Activated CD8-positive, alpha-beta T cell treated with anti-CD3 and anti-CD28 coated beads for 36 hours (primary cell): ENCODE measurements at regions of chr18 and their contacts with region 1.

Region 1: DNA sequence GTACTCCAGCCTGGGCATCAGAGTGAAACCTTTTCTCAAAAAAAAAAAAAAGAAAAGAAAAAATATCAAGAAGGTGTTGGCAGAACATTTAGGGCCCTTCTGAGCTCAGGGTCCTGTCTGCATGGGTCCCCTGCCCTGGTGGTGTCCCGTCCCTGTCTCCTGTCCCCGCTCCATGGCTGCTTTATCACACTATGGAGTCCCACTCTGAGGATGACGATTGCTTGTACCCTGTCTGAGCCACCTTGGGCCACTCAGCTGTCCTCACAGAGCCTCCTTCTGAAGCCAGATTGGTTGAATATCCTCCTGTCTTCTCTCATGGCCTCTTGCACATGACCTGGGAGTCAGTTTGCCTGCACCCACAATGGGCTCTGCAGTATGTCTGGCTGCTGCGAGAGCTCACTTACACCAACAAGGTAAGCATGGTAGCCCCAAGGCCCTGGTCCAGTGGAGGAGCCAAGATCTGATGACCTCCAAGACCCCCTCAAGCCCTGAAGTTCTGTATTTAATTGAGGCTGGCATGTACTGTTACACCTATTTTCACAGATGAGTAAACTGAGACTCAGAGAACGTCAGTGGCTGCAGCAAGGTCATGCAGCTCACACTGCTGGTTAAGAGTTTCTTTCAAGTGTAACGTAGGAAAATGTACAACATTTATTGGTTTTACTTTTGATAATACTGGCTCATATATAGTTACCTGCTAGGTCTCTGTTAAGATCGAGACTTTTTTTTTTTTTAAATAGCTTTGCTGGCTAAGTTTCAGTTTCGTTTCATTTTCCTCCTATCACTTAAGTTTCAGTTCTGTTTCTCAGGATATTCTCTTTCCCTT is 16.9 kb upstream of the ZCCHC2 start:
- DNase-seq: peak; percentile 58
- ATAC-seq: peak; percentile 96
- H3K4me3 Mint-ChIP-seq: peak overlapping the region; percentile 68
- H3K27ac Mint-ChIP-seq: peak overlapping the region; percentile 97
- H3K4me1 Mint-ChIP-seq: peaks cover 25% of the 10 kb centered on the region
- H3K27me3 Mint-ChIP-seq: no peaks in the 10 kb centered on the region
- CTCF ChIP-seq: no peak

Region 2: DNA sequence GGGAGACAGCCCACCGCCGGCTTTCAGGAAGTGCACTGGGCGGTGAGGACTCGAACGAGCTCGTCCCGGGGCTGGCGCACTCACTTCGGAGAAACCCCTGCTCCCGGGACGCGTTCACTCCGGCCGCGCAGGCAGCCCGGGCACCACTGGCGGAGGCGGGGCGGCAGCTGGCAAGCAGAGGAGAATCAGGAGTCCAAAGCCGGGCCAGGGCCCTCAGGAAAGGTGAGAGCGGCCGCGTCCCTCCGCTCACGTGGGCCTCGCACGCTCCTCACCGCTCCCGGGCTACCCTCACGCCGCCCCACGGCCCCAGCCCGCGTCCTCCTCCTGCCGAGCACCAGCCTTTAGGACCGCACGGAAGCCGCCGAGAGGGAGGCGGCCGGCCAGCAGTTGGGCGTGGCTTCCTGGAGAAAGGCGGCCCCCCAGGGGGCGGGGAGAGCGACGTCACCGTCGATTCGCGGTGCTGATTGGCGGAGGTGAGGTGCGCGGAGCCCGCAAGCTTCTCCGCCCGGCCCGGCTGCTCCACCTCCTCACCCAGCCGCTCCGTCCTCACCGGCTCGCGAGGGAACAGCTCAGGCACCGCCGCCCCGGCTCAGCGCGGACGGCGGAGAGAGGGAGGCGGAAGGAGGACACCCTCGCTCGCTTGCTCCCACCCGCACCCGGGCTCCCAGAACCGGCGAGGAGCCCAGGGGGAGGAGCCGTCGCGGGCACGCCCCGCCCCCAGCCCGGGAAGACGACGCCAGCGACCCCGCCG is 16.8 kb after region 1 on chr18 and contains the start of gene ZCCHC2:
- CTCF ChIA-PET with region 1: interaction called, 5 read pairs
- POLR2A ChIA-PET with region 1: interaction called, 44 read pairs
- intact Hi-C with region 1: no loop called
- DNase-seq: peak; percentile 97
- ATAC-seq: peak; percentile 80
- H3K4me3 Mint-ChIP-seq: peak within 1 kb of the TSS; percentile 84
- H3K27ac Mint-ChIP-seq: peak within 1 kb of the TSS; percentile 89
- H3K4me1 Mint-ChIP-seq: peaks cover 20% of the 10 kb centered on the region
- H3K27me3 Mint-ChIP-seq: no peaks in the 10 kb centered on the region
- CTCF ChIP-seq: no peak
- total RNA-seq, gene ZCCHC2: 31.7 to 33.4 TPM